GM23248 (cell line): ENCODE measurements at regions of chr22 and their contacts with region 1.

Region 1: DNA sequence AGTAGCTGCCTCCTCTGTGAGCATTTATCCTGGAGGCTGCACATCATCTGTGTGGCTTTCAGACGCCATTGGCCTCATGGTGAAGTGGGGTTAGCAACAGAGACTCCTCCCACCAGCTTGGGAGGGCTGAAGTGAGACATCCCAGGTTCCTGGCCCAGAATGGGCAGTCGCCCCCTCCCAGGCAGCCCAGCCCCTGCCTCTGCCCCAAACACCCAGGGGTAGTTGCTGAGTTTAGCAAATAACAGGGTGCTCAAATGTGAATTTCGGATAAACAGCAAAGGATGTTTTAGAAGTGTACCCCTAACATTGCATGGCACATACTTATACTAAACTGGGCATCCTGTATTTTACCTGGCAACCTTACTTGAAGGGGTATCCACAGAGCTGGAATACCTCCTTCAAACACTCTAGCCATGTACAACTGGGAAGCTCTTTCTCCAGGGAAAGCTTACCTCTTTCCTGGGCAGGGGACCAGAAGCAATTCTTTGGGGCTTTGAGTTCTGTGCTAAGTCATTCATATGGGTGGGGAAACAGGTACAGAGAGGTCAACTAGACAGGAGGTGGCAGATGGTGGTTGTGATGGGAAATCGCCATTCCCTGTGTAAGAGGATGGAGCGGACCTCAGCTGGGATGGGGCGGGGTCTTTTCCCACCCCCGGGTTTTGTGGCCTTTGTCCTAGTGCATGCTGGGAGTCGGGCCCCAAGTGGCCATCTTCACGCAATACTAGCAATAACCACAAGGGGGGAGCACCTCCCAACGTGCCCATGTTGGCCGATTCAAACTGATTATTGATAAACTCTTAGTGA is 19.3 kb downstream of the MTFP1 start:
- DNase-seq: peak; percentile 74
- H3K4me3 ChIP-seq: no peak overlapping the region
- H3K27ac ChIP-seq: no peak overlapping the region
- H3K4me1 ChIP-seq: peaks cover 12% of the 10 kb centered on the region
- H3K27me3 ChIP-seq: no peaks in the 10 kb centered on the region

Region 2: GRCh38 chr22:30490399-30490798 is 45.6 kb after region 1 on chr22:
- in situ Hi-C with region 1: loop called (anchors 5 kb)
- DNase-seq: no peak
- H3K4me3 ChIP-seq: no peak overlapping the region
- H3K27ac ChIP-seq: no peak overlapping the region
- H3K4me1 ChIP-seq: no peaks in the 10 kb centered on the region
- H3K27me3 ChIP-seq: no peaks in the 10 kb centered on the region; the same call in 1 of the 2 replicates

Region 3: DNA sequence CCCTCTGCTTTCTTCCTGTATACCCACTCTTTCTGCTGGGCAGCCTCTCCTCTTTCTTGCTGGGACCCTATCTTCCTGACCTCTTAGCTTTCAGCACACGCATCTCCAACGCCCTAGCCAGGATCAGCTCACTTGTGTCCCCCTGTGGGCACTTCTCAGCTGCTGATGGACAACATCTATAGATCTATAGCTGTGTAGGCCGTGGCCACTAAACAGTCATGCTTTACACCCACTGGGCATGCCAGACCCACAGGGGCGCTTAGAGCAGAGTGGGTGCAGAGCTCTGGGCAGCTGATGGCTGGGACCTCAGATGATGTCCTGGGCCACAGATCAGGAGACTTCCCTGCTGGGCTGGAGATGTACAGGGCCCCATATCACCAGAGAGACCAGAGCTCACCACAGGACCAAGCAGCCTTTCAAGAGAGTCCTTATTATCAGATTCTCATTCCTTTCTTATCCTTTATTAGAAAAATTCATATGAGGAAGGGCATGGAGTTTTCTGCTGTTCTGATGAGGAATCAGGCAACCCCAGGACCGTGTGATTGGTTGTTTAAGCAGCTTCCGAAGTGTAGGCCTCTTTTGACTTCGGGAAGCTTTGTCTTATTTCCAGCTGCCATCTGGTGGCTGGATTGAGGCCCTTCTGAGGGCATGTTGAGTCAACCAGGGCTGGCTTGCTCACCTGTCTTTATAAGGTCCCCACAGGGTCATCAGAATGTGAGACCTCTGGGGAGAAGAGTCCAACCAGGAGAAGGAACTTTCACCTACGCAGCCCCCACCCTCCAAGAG is 310.3 kb after region 1 on chr22:
- in situ Hi-C with region 1: loop called (anchors 10 kb)
- DNase-seq: peak; percentile 91
- H3K4me3 ChIP-seq: no peak overlapping the region
- H3K27ac ChIP-seq: no peak overlapping the region
- H3K4me1 ChIP-seq: no peaks in the 10 kb centered on the region
- H3K27me3 ChIP-seq: no peaks in the 10 kb centered on the region